ENCODE measurements at regions of chr11 and their contacts with region 1.

Region 1: DNA sequence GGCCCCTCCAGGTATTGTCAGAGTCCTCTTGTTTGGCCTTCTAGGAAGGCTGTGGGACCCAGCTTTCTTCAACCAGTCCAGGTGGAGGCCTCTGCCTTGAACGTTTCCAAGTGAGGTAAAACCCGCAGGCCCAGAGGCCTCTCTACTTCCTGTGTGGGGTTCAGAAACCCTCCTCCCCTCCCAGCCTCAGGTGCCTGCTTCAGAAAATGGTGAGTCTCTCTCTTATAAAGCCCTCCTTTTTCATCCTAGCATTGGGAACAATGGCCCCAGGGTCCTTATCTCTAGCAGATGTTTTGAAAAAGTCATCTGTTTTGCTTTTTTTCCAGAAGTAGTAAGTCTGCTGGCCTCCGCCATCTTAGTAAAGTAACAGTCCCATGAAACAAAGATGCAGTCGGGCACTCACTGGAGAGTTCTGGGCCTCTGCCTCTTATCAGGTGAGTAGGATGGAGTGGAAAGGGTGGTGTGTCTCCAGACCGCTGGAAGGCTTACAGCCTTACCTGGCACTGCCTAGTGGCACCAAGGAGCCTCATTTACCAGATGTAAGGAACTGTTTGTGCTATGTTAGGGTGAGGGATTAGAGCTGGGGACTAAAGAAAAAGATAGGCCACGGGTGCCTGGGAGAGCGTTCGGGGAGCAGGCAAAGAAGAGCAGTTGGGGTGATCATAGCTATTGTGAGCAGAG is at the start of gene CD3E:
- DNase-seq: peak; percentile 60
- H3K4me3 Mint-ChIP-seq: peak within 1 kb of the TSS; percentile 99
- H3K27ac Mint-ChIP-seq: peak within 1 kb of the TSS; percentile 98
- H3K4me1 Mint-ChIP-seq: peaks cover 62% of the 10 kb centered on the region
- H3K27me3 Mint-ChIP-seq: no peaks in the 10 kb centered on the region
- total RNA-seq, gene CD3E: 630 and 646 TPM in 2 replicates

Region 2: GRCh38 chr11:117817368-117818040 is 487.2 kb before region 1 on chr11:
- intact Hi-C with region 1: loop called (anchors 5 kb)
- DNase-seq: peak; percentile 83
- H3K4me3 Mint-ChIP-seq: peak overlapping the region; percentile 70
- H3K27ac Mint-ChIP-seq: peak overlapping the region; percentile 98
- H3K4me1 Mint-ChIP-seq: peaks cover 79% of the 10 kb centered on the region
- H3K27me3 Mint-ChIP-seq: no peaks in the 10 kb centered on the region

Region 3: GRCh38 chr11:118251858-118252652 is 52.7 kb before region 1 on chr11 and contains the start of gene MPZL3:
- intact Hi-C with region 1: loop called (anchors 1 kb)
- DNase-seq: peak; percentile 71
- H3K4me3 Mint-ChIP-seq: peak within 1 kb of the TSS; percentile 96
- H3K27ac Mint-ChIP-seq: peak within 1 kb of the TSS; percentile 97
- H3K4me1 Mint-ChIP-seq: peaks cover 51% of the 10 kb centered on the region
- H3K27me3 Mint-ChIP-seq: no peaks in the 10 kb centered on the region
- total RNA-seq, gene MPZL3: 63.5 and 69.3 TPM in 2 replicates

Region 4: DNA sequence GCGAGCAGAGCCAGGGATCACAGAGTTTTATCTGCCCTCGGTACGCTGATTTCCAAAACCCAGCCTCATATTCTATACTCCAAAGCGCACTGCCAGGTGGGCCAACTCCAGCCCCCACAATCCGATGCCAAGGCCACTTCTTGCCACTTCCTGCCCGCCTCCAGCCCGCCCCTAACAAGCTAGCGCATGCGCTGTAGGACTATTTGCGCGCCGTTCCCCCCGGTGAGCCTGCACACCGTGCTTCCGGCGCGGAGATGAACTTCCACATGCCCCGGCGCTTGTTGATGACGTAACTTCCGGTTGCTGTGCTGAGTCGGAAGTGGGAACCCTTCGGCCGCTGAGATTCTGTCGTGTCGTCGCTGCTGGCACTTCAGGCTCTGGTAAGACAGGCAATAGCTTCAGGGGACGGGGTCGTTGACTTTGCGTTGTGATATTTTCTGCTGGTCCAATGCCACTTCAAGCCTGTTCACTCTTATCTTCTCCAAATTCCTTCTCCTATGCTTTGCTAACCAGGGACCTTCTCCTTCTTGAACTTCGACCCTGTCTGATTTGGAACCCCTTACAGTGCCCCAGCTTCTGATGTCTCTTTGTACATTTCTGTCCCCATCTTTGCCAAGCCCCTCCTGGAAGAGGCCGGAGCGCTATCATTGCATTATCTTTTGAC is 54.7 kb after region 1 on chr11 and contains the start of gene UBE4A:
- intact Hi-C with region 1: loop called (anchors 1 kb)
- DNase-seq: peak; percentile 94
- H3K4me3 Mint-ChIP-seq: peak within 1 kb of the TSS; percentile 95
- H3K27ac Mint-ChIP-seq: peak within 1 kb of the TSS; percentile 89
- H3K4me1 Mint-ChIP-seq: peaks cover 39% of the 10 kb centered on the region
- H3K27me3 Mint-ChIP-seq: no peaks in the 10 kb centered on the region
- total RNA-seq, gene UBE4A: 44.1 and 46.0 TPM in 2 replicates

Region 5: GRCh38 chr11:118488480-118489109 is 183.9 kb after region 1 on chr11:
- intact Hi-C with region 1: loop called (anchors 5 kb)
- DNase-seq: peak; percentile 64
- H3K4me3 Mint-ChIP-seq: no peak overlapping the region
- H3K27ac Mint-ChIP-seq: no peak overlapping the region
- H3K4me1 Mint-ChIP-seq: peaks cover 7% of the 10 kb centered on the region
- H3K27me3 Mint-ChIP-seq: no peaks in the 10 kb centered on the region